GM23248 (cell line): ENCODE measurements at regions of chr1 and their contacts with region 1.

Region 1: GRCh38 chr1:85237613-85238012 is 21.8 kb downstream of the C1orf52 start:
- DNase-seq: no peak
- H3K4me3 ChIP-seq: no peak overlapping the region
- H3K27ac ChIP-seq: no peak overlapping the region
- H3K4me1 ChIP-seq: peaks cover 12% of the 10 kb centered on the region
- H3K27me3 ChIP-seq: no peaks in the 10 kb centered on the region; the same call in 1 of the 2 replicates

Region 2: DNA sequence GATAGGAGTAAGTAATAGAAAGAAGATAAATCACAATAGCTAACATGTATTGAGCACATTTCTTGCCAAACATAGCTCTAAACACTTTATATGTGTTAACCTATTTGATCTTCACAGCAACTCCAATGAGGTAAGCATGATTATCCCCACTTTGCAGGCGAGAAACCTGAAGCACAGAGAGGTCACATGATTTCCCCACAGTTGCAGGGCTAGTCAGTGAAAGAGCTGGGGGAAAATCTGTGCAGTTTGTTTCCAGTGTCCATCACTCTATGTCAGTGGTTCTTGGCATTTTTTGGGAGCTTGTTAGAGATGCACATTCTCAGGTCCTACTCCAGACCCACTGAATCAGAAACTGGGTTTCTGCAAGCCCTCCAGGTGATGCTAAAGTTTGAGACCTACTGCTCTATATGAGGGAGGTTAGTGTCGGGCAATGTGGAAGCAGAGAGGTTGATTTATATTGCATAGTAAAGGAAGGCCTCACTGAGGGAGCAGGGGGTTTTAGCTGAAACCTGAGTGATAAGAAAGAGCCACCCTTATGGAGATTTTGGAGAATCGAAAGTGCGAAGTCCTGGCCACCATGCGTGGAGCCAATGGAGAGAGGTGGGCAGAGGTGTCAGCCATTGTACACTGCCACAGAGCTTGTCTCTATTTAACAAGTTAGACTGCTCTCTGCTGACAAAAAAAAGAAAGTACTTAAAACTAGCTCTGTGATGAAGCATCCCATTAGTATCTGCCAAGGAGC is 210.2 kb before region 1 on chr1:
- in situ Hi-C with region 1: no loop called
- DNase-seq: peak; percentile 35
- H3K4me3 ChIP-seq: no peak overlapping the region
- H3K27ac ChIP-seq: no peak overlapping the region
- H3K4me1 ChIP-seq: no peaks in the 10 kb centered on the region
- H3K27me3 ChIP-seq: no peaks in the 10 kb centered on the region

Region 3: DNA sequence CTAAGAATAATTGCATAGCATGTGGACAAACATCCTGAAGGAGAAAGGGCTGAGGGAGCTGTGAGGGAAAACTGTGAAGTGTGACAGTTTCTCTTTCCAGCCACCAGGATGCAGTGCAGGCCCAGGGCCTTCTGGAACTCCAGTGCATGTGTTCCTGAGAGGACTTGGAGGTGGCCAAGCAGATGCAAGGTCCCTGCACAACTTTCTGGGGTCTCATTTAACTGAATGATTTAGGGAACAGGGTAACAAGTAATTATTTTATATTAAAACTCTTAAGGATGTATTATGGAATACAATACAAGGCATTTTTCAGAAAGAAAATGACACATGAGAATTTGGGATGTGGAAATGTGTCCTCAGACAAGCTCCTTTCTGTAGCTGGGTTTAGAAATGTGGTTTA is 128.1 kb before region 1 on chr1:
- in situ Hi-C with region 1: loop called (anchors 5 kb)
- DNase-seq: peak; percentile 81
- H3K4me3 ChIP-seq: no peak overlapping the region
- H3K27ac ChIP-seq: no peak overlapping the region
- H3K4me1 ChIP-seq: no peaks in the 10 kb centered on the region
- H3K27me3 ChIP-seq: no peaks in the 10 kb centered on the region

Region 4: GRCh38 chr1:85387781-85388180 is 150.2 kb after region 1 on chr1:
- in situ Hi-C with region 1: no loop called
- DNase-seq: no peak
- H3K4me3 ChIP-seq: no peak overlapping the region
- H3K27ac ChIP-seq: no peak overlapping the region
- H3K4me1 ChIP-seq: no peaks in the 10 kb centered on the region
- H3K27me3 ChIP-seq: no peaks in the 10 kb centered on the region